PC-9 (cell line): ENCODE measurements at regions of chr2 and their contacts with region 1.

Region 1: GRCh38 chr2:98479959-98480524 is 35.4 kb downstream of the INPP4A start:
- DNase-seq: peak; percentile 93 to 97
- H3K4me3 ChIP-seq: no peak overlapping the region
- H3K27ac ChIP-seq: peak overlapping the region; percentile 93
- H3K4me1 ChIP-seq: peaks cover 69% of the 10 kb centered on the region
- H3K27me3 ChIP-seq: no peaks in the 10 kb centered on the region
- CTCF ChIP-seq: no peak

Region 2: GRCh38 chr2:98444436-98445176 is 35.4 kb before region 1 on chr2 and contains the start of gene INPP4A:
- CTCF ChIA-PET with region 1: no interaction called
- POLR2A ChIA-PET with region 1: interaction called, 11 read pairs
- intact Hi-C with region 1: loop called (anchors 1 kb)
- DNase-seq: peak; percentile 53 to 80
- H3K4me3 ChIP-seq: peak within 1 kb of the TSS; percentile 91
- H3K27ac ChIP-seq: peak within 1 kb of the TSS; percentile 45
- H3K4me1 ChIP-seq: peaks cover 22% of the 10 kb centered on the region
- H3K27me3 ChIP-seq: no peaks in the 10 kb centered on the region
- CTCF ChIP-seq: no peak
- total RNA-seq, gene INPP4A: 50.5 and 52.9 TPM in 2 replicates

Region 3: DNA sequence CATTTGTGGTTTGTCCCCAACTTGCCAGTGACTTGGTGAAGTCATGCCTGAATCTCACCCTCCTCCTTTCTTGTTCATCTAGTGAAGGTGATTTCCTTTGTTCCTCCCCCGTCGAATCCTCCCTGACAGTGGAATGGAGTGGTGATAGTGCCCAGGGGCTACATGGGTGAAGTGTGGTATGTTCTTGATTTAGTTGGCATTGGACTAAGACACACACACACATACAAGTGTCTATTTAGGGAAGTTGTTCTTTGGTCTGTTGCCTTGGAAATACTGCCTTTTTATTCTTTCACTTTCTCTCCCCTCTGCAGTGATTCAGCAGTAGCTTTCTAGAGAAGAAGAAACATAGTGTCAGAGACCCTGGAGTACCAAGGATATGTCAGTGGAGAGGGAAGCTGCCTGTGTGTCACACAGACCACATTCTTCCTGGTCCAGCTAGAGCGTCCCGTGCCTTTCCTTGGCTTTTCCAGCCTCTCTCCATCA is 24.5 kb before region 1 on chr2:
- CTCF ChIA-PET with region 1: no interaction called
- POLR2A ChIA-PET with region 1: interaction called, 12 read pairs
- intact Hi-C with region 1: loop called (anchors 1 kb)
- DNase-seq: no peak
- H3K4me3 ChIP-seq: no peak overlapping the region
- H3K27ac ChIP-seq: peak overlapping the region; percentile 92; the same call in 1 of the 2 replicates
- H3K4me1 ChIP-seq: peaks cover 60% of the 10 kb centered on the region
- H3K27me3 ChIP-seq: no peaks in the 10 kb centered on the region
- CTCF ChIP-seq: no peak

Region 4: GRCh38 chr2:98502556-98503335 is 22.7 kb after region 1 on chr2:
- CTCF ChIA-PET with region 1: no interaction called
- POLR2A ChIA-PET with region 1: interaction called, 3 read pairs
- intact Hi-C with region 1: loop called (anchors 1 kb)
- DNase-seq: peak in 1 of 2 experiments; percentile 87
- H3K4me3 ChIP-seq: no peak overlapping the region
- H3K27ac ChIP-seq: peak overlapping the region; percentile 69
- H3K4me1 ChIP-seq: peaks cover 37% of the 10 kb centered on the region
- H3K27me3 ChIP-seq: no peaks in the 10 kb centered on the region
- CTCF ChIP-seq: no peak

Region 5: DNA sequence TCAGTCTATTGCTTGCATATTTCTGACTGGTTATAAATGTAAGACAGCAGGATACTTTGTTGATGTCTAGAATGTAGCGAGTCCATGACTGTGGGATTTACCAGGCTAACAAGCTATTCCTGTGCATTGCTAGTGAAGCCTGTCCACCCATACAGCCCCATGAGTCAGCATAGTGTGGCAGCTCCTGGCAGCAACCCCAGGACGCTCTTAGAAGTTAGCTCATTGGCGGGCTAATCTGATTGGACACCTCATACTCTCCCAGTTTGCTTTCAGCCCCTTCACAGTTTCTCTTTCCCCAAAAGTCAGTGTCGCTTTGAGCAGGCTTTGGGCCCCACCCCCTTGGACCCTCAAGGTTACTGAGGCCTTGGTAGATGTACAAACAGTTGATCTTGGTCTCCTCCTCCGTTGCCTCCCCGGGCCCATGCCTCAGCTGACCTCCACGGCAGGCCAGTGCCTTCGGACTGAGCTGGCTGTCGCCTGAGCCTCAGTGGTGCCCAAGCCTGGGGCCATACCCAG is 80.3 kb after region 1 on chr2:
- CTCF ChIA-PET with region 1: interaction called, 4 read pairs
- POLR2A ChIA-PET with region 1: interaction called, 6 read pairs
- intact Hi-C with region 1: loop called (anchors 5 kb)
- DNase-seq: peak in 1 of 2 experiments; percentile 58
- H3K4me3 ChIP-seq: no peak overlapping the region
- H3K27ac ChIP-seq: no peak overlapping the region
- H3K4me1 ChIP-seq: no peaks in the 10 kb centered on the region
- H3K27me3 ChIP-seq: no peaks in the 10 kb centered on the region
- CTCF ChIP-seq: no peak

Region 6: DNA sequence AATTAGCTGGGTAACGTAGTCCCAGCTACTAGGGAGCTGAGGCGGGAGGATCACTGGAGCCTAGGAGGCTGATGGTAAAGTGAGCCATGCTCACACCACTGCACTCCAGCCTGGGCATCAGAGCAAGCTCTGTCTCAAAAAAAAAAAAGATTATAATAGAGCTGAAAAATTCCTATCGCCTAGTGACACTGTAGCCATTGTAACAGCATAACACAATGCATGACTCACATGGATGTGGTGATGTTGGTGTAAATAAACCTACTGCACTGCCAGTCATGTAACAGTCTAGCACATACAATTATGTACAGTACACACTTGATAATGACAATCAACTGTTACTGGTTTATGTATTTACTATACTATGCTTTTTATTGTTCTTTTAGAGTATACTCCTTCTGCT is 211.3 kb after region 1 on chr2:
- CTCF ChIA-PET with region 1: no interaction called
- POLR2A ChIA-PET with region 1: no interaction called
- intact Hi-C with region 1: no loop called
- DNase-seq: peak in 1 of 2 experiments; percentile 54
- H3K4me3 ChIP-seq: no peak overlapping the region
- H3K27ac ChIP-seq: no peak overlapping the region
- H3K4me1 ChIP-seq: no peaks in the 10 kb centered on the region
- H3K27me3 ChIP-seq: no peaks in the 10 kb centered on the region
- CTCF ChIP-seq: no peak

Region 7: DNA sequence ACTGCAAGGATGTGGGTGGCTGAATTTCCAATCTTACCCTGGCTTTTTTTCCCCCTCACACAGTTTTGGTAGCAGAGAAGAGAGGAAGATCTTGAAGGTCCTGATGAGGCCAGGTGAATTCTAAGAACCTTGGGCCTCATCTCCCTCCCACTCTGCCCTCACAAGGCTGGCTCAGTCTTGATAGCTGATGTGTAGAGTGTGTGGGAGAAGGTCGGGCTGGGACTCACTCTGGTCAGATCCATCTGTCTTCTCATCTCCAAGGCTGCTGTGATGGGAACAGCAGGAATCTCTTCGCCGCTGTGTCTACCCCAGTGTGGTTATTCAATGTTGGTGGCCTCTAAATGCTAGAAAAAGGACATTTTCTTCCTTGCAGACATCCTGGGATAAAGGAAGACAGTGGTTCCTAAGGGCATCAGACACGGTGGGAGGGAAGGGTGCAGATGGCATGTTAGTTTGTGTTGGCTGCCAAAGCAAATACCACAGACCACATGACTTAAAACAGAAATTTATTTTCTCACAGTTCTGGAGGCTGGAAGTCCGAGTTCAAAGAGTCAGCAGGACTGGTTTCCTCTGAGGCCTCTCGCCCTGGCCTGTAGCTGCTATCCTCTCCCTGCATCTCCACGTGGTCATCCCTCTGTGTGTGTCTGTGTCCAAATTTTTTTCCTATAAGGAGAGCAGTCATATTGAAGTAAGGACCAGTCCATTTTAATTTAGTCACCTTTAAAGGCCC is 288.5 kb after region 1 on chr2:
- CTCF ChIA-PET with region 1: interaction called, 14 read pairs
- POLR2A ChIA-PET with region 1: no interaction called
- intact Hi-C with region 1: no loop called
- DNase-seq: peak; percentile 32 to 76
- H3K4me3 ChIP-seq: no peak overlapping the region
- H3K27ac ChIP-seq: no peak overlapping the region
- H3K4me1 ChIP-seq: peaks cover 34% of the 10 kb centered on the region
- H3K27me3 ChIP-seq: no peaks in the 10 kb centered on the region
- CTCF ChIP-seq: no peak